Calu3 (cell line): ENCODE measurements at regions of chr13 and their contacts with region 1.

Region 1: DNA sequence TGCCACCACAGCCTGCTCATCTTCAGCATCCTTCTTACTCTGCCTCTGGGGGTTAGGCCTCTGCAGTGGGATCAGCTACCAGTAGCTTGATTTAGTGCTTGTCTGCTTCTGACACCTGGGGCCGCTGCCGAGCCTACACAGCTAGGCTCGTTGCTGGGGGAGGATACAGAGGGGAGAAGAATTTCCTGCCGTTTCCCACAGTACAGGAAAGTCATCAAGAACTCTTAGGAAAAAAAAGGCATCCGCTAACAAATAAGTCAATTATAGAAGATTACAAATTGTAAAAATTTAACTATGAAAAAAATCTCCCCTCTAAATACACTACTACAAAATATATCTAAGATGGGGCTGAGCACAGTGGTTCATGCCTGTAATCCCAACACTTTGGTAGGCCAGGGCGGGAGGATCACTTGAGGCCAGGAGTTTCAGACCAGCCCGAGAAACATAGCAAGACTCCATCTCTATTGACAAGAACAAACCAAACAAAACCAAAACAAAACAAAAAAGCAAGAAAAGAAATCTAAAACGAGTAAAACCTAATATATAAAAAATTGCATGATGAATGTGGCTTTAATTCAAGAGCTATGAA is 26.7 kb downstream of the LATS2 start:
- DNase-seq: peak; percentile 49
- H3K4me3 Mint-ChIP-seq: peak overlapping the region; percentile 49
- H3K27ac Mint-ChIP-seq: peak overlapping the region; percentile 93
- H3K4me1 Mint-ChIP-seq: peaks cover 54% of the 10 kb centered on the region
- H3K27me3 Mint-ChIP-seq: no peaks in the 10 kb centered on the region
- CTCF ChIP-seq: no peak

Region 2: DNA sequence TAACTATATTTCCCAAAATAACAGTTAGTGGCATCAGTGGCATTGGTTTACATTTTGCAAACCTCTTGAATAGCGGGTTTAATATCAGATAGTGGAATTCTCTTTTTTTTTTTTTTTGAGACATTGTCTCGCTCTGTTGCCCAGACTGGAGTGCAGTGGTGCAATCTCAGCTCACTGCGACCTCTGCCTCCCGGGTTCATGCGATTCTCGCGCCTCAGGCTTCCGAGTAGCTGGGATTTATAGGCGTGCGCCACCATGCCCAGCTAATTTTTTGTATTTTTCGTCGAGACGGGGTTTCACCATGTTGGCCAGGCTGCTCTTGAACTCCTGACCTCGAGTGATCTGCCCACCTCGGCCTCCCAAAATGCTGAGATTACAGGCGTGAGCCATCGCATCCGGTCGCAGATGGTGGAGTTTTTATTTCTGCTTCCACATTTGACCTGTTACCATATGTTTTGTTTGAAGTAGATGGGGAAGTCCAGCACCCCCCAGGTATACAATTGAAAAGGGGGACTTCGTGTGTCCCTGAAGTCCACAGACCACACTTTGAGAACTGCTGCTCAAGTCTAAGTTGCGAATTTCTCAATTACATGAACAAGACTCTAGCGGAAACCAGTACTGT is 91.6 kb before region 1 on chr13:
- CTCF ChIA-PET with region 1: interaction called, 3 read pairs
- intact Hi-C with region 1: loop called (anchors 2 kb)
- DNase-seq: no peak
- H3K4me3 Mint-ChIP-seq: no peak overlapping the region
- H3K27ac Mint-ChIP-seq: peak overlapping the region; percentile 53
- H3K4me1 Mint-ChIP-seq: peaks cover 7% of the 10 kb centered on the region
- H3K27me3 Mint-ChIP-seq: no peaks in the 10 kb centered on the region
- CTCF ChIP-seq: no peak

Region 3: GRCh38 chr13:21058361-21058760 is 23.7 kb after region 1 on chr13:
- CTCF ChIA-PET with region 1: no interaction called
- intact Hi-C with region 1: loop called (anchors 2 kb)
- DNase-seq: peak; percentile 27
- H3K4me3 Mint-ChIP-seq: no peak overlapping the region
- H3K27ac Mint-ChIP-seq: no peak overlapping the region
- H3K4me1 Mint-ChIP-seq: peaks cover 20% of the 10 kb centered on the region
- H3K27me3 Mint-ChIP-seq: no peaks in the 10 kb centered on the region
- CTCF ChIP-seq: no peak

Region 4: GRCh38 chr13:21164631-21165030 is 129.9 kb after region 1 on chr13:
- CTCF ChIA-PET with region 1: no interaction called
- intact Hi-C with region 1: no loop called
- DNase-seq: no peak
- H3K4me3 Mint-ChIP-seq: no peak overlapping the region
- H3K27ac Mint-ChIP-seq: no peak overlapping the region
- H3K4me1 Mint-ChIP-seq: no peaks in the 10 kb centered on the region
- H3K27me3 Mint-ChIP-seq: no peaks in the 10 kb centered on the region
- CTCF ChIP-seq: no peak

Region 5: GRCh38 chr13:21383090-21383489 is 348.4 kb after region 1 on chr13:
- CTCF ChIA-PET with region 1: no interaction called
- intact Hi-C with region 1: no loop called
- DNase-seq: no peak
- H3K4me3 Mint-ChIP-seq: no peak overlapping the region
- H3K27ac Mint-ChIP-seq: no peak overlapping the region
- H3K4me1 Mint-ChIP-seq: no peaks in the 10 kb centered on the region
- H3K27me3 Mint-ChIP-seq: no peaks in the 10 kb centered on the region
- CTCF ChIP-seq: no peak